ENCODE measurements at regions of chr2 and their contacts with region 1.

Region 1: DNA sequence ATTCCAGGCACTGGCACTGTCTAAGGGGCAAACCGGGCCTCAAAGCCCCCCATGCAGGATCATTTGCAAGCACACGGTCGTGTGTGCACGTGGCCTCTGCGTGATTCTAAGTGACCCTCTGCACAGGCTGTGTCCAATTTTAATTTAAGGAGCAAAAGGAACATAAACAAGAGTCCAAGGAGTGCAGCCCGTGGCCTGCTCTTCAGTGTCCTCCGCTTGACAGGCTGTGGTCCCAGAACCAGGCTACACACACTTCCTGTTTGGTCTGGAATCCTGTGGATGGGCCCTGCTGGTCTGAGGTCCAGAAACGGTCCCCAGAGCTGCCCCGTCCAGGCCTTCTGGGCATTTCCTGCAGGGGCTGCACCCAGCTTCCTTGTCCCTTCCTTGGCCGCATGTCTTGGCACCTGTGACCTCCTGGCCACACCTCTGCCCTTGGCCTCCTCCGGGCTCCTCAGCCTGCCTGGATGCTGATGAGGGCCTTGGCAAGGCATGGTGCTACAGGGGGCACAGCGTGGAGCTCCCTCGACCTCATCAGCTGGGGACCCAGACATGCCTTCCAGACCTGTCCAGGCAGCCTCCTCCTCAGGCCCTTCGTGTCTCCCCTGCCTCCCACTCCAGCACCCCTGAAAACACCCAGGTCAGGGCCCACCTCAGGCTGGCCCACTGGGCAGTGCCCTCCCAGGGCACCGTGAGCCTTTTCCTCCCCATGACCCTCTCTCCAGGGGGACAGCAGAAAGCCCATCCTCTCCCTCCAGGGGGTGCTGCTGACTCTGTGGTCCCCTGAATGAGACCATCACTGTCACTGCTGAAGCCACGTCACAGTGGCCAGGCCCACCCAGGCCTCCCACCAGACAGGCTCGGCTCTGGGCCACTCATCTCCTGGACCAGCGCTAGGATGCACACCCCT is 136.4 kb upstream of the GPC1 start:
- DNase-seq: peak in 1 of 2 donors; percentile 36
- H3K4me3 ChIP-seq: no peak overlapping the region
- H3K27ac ChIP-seq: no peak overlapping the region
- H3K4me1 ChIP-seq: no peaks in the 10 kb centered on the region
- H3K27me3 ChIP-seq: no peaks in the 10 kb centered on the region
- CTCF ChIP-seq: no peak
- POLR2A ChIP-seq: no peak

Region 2: GRCh38 chr2:238945433-238946150 is 1353.5 kb before region 1 on chr2:
- intact Hi-C with region 1: no loop called
- DNase-seq: peak in 1 of 2 donors; percentile 16
- H3K4me3 ChIP-seq: no peak overlapping the region
- H3K27ac ChIP-seq: no peak overlapping the region
- H3K4me1 ChIP-seq: no peaks in the 10 kb centered on the region
- H3K27me3 ChIP-seq: no peaks in the 10 kb centered on the region
- CTCF ChIP-seq: peak; percentile 16 to 21 (median 19)
- POLR2A ChIP-seq: no peak

Region 3: GRCh38 chr2:239858179-239858578 is 440.9 kb before region 1 on chr2:
- intact Hi-C with region 1: loop called (anchors 5 kb)
- DNase-seq: no peak
- H3K4me3 ChIP-seq: no peak overlapping the region
- H3K27ac ChIP-seq: no peak overlapping the region
- H3K4me1 ChIP-seq: no peaks in the 10 kb centered on the region
- H3K27me3 ChIP-seq: no peaks in the 10 kb centered on the region
- CTCF ChIP-seq: no peak
- POLR2A ChIP-seq: no peak

Region 4: DNA sequence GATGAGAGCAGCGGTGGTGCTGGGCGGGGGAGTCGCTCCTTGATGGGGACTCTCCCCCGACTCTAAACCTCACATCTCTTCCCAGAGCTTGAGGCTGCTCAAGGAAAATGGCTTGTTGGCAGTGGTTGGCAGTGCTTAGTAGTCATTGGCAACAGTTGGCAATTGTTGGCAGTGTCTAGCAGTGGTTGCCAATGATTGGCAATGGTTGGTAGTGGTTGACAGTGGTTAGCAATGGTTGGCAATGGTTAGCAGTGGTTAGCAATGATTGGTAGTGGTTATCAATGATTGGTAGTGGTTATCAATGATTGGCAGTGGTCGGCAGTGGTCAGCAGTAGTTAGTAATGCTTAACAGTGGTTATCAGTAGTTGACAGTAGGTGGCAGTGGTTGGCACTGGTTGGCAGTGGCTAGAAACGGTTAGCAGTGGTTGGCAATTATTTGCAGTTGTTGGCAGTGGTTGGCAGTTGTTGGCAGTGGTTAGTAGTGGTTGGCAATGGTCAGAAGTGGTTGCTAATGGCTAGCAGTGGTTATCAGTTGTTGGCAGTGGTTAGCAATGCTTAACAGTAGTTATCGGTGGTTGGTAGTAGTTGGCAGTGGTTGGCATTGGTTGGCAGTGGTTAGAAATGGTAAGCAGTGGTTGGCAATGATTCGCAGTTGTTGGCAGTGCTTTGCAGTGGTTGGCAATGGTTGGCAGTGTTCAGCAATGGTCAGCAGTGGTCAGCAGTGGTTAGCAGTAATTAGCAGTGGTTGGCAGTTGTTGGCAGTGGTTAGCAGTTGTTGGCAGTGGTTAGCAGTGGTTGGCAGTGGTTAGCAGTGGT is 73.2 kb before region 1 on chr2:
- intact Hi-C with region 1: no loop called
- DNase-seq: peak; percentile 2 to 19
- H3K4me3 ChIP-seq: no peak overlapping the region
- H3K27ac ChIP-seq: no peak overlapping the region
- H3K4me1 ChIP-seq: no peaks in the 10 kb centered on the region
- H3K27me3 ChIP-seq: peaks cover 0 to 7% of the 10 kb centered on the region in 2 donors
- CTCF ChIP-seq: no peak
- POLR2A ChIP-seq: no peak